Activated B cell treated with CpG ODN at 0.5 μM for 24 hours (primary cell): ENCODE measurements at regions of chr6 and their contacts with region 1.

Region 1: DNA sequence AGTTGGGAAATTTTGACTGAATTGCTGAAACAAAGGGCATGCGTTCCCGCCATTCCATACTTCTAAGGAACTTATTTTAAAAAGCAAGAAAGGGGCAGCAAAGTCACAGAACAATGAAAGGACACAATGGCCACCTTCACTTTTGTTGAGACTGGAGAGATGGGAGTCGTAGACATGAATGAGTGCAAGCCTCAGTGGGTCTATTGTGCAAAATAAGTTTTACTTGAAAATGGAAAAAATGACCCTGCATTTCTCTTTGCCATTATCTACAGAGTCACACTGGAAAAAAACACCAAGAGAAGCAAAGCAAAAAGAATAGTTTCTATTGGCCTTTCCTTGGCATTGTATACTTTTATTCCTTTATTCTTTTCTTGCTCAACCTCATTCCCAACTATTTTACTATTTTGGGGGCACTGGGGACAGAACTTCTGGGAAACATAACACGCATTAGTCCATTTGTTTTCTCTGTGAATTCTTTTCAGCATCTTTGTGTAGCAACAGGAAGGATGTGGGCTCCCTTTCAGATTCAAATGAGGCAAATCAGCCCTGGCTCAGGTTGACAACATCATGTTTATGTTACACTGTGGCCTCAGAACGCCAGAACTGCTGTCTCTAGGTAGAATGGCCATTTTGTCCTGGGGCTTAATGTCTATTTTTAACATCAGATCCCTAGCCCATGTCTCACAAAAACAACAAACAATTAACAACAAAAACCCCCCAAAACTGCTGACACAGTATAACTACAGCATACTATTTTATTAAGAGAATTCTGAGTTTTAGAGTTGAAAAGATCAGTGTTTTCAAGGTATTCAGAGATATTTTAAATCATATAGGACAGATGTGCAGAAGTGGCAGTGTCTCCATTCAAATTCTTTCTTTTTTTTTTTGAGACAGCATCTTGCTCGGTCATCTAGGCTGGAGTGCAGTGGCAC is 122.2 kb downstream of the FYN start:
- DNase-seq: no peak
- ATAC-seq: peak; percentile 42
- H3K4me3 Mint-ChIP-seq: peak overlapping the region; percentile 51
- H3K27ac Mint-ChIP-seq: peak overlapping the region; percentile 75
- H3K4me1 Mint-ChIP-seq: peaks cover 74% of the 10 kb centered on the region
- H3K27me3 Mint-ChIP-seq: no peaks in the 10 kb centered on the region
- CTCF ChIP-seq: no peak

Region 2: DNA sequence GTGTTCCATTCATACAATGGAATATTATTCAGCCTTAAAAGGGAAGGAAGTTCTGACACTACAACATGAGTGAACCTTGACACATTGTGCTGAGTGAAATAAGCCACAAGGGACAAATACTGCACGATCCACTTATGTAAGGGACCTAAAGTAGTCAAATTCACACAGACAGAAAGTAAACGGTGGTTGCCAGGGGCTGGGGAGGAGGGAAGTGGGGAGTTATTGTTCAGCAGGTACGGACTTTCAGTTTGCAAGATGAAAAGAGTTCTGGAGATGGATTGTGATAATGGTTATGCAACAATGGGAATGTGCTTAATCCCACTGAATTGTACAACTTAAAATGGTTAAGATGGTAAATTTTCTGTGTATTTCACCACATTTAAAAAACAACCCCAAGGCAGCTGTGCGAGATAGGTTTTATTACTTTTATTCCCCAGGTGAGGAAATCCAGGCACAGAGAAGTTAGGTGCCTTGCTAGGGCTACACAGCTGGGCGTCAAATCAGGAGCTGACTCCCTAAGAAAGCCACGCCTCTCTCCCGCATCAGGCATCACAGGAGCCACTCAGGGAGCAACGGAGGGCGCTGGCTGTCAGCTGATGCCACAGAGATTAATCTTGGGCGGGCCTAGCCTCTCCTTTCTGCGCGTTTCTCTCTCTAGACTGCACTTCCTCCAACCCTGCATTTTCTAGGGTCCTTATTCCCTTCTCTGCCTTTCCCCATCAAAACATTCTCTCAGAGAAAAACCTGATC is 136.0 kb before region 1 on chr6:
- CTCF ChIA-PET with region 1: no interaction called
- POLR2A ChIA-PET with region 1: no interaction called
- intact Hi-C with region 1: no loop called
- DNase-seq: no peak
- ATAC-seq: no peak
- H3K4me3 Mint-ChIP-seq: no peak overlapping the region
- H3K27ac Mint-ChIP-seq: no peak overlapping the region
- H3K4me1 Mint-ChIP-seq: no peaks in the 10 kb centered on the region
- H3K27me3 Mint-ChIP-seq: peaks cover 14% of the 10 kb centered on the region
- CTCF ChIP-seq: no peak

Region 3: DNA sequence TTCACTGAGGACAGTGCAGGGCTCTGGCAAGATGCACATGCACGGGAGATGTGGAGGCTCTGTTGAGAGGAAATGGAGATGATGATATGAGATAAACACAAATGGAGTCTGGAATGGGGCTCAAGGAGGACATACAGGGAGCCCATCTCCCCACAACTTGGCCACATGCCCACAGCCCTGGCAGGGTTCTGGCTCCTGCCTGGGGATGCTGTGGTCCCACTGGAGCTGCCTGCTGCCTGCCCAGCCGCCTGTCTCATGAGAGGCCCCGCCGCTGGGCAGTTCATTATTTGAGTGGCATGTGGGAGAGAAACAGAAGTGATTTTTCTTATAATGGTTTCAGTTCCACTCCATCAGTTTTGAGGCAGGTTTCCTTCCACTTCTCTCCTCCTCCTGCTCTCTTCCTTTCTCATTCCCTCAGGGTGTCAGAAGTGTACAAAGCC is 11.7 kb before region 1 on chr6:
- CTCF ChIA-PET with region 1: interaction called, 3 read pairs
- POLR2A ChIA-PET with region 1: interaction called, 5 read pairs
- intact Hi-C with region 1: loop called (anchors 1 kb)
- DNase-seq: no peak
- ATAC-seq: no peak
- H3K4me3 Mint-ChIP-seq: no peak overlapping the region
- H3K27ac Mint-ChIP-seq: no peak overlapping the region
- H3K4me1 Mint-ChIP-seq: peaks cover 54% of the 10 kb centered on the region
- H3K27me3 Mint-ChIP-seq: no peaks in the 10 kb centered on the region
- CTCF ChIP-seq: no peak

Region 4: DNA sequence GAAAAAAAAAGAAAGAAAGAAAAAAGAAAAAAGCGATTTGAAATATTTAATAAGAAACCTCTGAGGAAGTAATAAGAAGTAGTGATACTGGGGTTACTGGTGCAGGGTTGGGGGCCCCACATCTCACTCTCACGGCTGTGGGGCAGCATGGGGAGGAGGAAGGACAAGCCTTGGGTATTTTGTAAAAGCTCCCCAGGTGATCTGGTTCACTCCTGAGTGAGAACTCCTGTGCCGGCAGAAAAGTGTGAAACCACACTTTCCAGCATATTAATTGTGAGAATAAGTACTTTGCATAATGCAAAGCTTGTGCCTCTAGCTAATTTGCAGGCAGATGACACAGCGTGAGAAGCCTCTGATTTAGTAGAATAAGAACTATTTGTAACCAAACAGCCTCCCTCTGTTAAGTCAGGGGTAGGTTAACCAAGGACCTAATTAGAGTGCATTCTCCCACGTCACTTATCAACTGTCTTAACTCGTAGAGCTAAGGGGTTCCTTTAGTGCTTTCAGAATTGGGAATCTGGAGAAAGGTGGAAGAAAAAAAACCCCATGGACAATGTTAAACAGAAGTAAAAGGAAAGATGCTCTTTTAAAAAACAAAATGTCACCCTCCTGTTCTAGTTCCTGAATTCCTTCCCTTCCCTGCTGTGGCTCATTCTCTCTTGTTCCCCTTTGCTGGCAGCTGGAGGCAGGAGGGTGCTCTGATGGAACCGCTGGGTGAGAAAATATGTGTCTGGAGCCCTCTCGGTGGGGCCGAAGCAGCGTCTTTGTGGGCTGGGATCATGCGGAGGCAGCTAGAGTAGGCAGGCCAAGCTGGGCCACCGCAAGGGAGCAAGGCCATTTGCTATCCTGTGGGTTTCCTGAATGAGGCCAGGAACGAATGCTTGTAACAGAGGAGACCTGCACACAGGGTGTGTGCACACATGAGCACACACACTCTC is 13.5 kb after region 1 on chr6:
- CTCF ChIA-PET with region 1: interaction called, 3 read pairs
- POLR2A ChIA-PET with region 1: interaction called, 7 read pairs
- intact Hi-C with region 1: loop called (anchors 1 kb)
- DNase-seq: no peak
- ATAC-seq: peak; percentile 82
- H3K4me3 Mint-ChIP-seq: peak overlapping the region; percentile 61
- H3K27ac Mint-ChIP-seq: peak overlapping the region; percentile 81
- H3K4me1 Mint-ChIP-seq: peaks cover 94% of the 10 kb centered on the region
- H3K27me3 Mint-ChIP-seq: no peaks in the 10 kb centered on the region
- CTCF ChIP-seq: no peak

Region 5: DNA sequence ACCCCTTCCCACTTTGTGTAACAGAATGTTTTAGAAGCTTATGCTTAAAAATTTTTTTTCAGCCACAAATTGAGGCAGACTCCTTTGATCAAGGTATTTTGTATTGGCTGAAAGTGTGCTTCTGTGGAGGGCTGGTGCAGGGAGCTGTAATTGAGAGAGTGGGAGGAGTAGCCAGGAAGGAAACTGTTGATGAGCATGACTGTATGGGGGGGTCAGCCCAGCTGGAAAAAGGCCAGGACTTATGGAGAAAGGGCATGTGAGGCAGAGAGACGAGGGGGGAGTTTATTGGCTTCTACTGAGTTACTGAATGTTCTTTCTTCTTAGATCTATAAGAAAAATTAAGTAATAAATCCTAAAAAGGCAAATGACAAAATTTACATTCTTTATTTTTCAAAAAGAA is 609.5 kb after region 1 on chr6:
- CTCF ChIA-PET with region 1: no interaction called
- POLR2A ChIA-PET with region 1: no interaction called
- intact Hi-C with region 1: no loop called
- DNase-seq: no peak
- ATAC-seq: no peak
- H3K4me3 Mint-ChIP-seq: no peak overlapping the region
- H3K27ac Mint-ChIP-seq: no peak overlapping the region
- H3K4me1 Mint-ChIP-seq: no peaks in the 10 kb centered on the region
- H3K27me3 Mint-ChIP-seq: no peaks in the 10 kb centered on the region
- CTCF ChIP-seq: no peak